HEK293T (cell line): ENCODE measurements at regions of chr4 and their contacts with region 1.

Region 1: DNA sequence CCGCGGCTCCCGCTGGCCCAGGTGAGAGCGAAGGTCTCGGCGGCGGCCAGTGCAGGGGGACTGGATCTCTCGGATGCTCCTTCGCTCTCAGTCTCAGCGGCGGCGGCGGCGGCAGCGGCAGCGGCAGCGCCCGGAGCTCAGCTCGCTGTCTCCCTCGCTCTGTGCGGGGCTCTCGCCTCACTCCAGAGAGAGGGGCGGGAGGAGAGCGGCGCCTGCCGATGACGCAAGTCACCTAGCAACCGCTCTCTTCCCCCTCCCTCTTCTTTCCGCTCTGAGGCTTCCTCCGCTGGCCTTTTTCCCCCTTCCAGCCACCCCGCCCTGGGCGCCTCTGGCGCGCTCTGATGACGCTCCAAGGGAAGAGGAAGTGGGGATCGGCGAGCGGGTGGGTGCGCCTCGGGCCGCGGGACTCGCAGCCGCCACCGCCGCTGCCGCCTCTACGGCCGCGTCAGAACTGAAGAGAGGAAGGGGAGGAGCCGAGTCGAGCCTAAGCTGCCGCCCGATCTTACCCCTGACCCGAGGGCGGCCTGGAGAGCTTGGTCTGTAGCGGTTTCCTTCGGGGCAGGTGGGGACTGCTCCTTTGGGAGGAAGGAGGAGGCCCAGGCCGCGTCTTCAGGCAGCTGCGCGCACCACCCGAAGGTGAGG is at the start of gene FBXW7:
- DNase-seq: peak; percentile 96

Region 2: DNA sequence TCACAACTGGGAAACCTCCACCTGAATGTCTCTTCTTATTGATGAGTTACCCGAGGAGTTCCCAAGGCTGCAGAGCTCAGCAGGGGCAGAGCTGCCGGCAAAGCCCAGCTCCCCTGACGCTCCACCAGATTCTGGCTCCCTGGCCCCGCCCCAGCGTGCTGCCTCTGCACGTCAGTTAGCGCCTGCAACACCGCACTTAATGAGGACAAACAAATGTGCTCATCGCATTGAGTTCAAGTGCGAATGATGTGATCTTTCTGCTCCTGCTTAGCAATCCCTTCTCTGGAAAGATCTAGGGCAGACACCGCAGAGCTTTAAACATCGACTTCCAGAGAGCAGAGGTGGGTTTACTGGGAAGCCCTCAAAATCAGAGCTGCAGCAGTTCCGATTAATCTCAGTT is 55.4 kb after region 1 on chr4:
- CTCF ChIA-PET with region 1: no interaction called
- POLR2A ChIA-PET with region 1: interaction called, 10 read pairs
- DNase-seq: peak; percentile 60